CD4-positive, alpha-beta memory T cell (primary cell): ENCODE measurements at regions of chr9 and their contacts with region 1.

Region 1: GRCh38 chr9:135490980-135491464 is 9.5 kb upstream of the MRPS2 start:
- DNase-seq: no peak
- H3K4me3 ChIP-seq: no peak overlapping the region
- H3K4me3 Mint-ChIP-seq: no peak overlapping the region
- H3K27ac ChIP-seq: no peak overlapping the region
- H3K27ac Mint-ChIP-seq: no peak overlapping the region
- H3K4me1 ChIP-seq: no peaks in the 10 kb centered on the region
- H3K4me1 Mint-ChIP-seq: no peaks in the 10 kb centered on the region
- H3K27me3 ChIP-seq: no peaks in the 10 kb centered on the region
- H3K27me3 Mint-ChIP-seq: peaks cover 4% of the 10 kb centered on the region in 2 donors

Region 2: DNA sequence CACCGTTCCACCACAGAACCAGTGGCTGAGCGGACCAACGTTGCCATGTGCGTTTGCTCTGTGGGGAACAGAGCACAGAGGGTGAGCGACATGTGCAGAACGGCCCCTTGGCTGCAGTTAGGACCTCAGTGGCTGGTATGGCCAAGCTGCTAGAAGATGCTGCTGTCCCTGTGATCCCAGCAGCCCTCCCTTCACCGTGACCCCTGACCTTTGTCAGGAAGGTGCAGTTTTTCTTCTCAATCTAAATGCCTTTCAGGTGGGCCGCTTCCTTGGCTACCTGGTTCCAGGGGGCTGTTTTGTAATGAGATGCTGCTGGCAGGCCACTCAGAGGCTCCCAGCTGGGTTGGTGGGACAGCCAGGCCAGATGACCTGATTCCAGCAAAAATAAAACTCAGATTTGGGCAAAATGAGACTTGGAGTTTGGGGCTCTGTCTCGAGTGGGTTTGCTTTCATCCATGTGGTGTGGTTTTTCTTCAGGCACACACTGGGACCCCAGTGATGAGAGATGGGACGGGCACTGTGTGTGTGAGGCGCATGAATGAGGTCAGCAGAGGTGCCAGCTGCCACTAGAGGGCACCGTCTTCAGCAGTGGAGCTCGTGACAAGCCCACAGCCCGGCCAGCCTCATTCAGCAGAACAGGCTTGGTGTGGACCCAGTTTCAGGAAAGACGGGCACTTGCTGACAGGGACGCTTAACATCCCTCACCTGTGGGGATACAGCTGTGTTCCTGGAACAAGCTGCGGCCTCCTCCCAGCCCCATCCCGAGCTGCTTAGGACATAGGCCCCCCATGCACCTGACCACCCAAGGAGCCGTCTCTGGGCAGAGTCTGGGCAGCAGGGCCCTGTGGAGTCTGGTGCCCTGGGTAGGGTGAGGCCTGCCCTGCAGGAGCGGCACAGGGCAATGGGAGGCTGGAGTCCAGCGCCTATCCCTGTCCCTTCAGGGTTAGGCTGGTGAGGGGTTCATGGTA is 13.5 kb after region 1 on chr9:
- CTCF ChIA-PET with region 1: interaction called, 11 read pairs
- POLR2A ChIA-PET with region 1: no interaction called
- intact Hi-C with region 1: no loop called
- DNase-seq: peak; percentile 33 to 50 (median 35)
- H3K4me3 ChIP-seq: no peak overlapping the region
- H3K4me3 Mint-ChIP-seq: peak overlapping the region in 3 of 8 donors; percentile 21 to 43 (median 41)
- H3K27ac ChIP-seq: no peak overlapping the region
- H3K27ac Mint-ChIP-seq: peak overlapping the region in 3 of 7 donors; percentile 10 to 37 (median 12)
- H3K4me1 ChIP-seq: peaks cover 24% of the 10 kb centered on the region
- H3K4me1 Mint-ChIP-seq: peaks cover 5 to 28% (median 16%) of the 10 kb centered on the region in 4 donors
- H3K27me3 ChIP-seq: no peaks in the 10 kb centered on the region
- H3K27me3 Mint-ChIP-seq: no peaks in the 10 kb centered on the region

Region 3: DNA sequence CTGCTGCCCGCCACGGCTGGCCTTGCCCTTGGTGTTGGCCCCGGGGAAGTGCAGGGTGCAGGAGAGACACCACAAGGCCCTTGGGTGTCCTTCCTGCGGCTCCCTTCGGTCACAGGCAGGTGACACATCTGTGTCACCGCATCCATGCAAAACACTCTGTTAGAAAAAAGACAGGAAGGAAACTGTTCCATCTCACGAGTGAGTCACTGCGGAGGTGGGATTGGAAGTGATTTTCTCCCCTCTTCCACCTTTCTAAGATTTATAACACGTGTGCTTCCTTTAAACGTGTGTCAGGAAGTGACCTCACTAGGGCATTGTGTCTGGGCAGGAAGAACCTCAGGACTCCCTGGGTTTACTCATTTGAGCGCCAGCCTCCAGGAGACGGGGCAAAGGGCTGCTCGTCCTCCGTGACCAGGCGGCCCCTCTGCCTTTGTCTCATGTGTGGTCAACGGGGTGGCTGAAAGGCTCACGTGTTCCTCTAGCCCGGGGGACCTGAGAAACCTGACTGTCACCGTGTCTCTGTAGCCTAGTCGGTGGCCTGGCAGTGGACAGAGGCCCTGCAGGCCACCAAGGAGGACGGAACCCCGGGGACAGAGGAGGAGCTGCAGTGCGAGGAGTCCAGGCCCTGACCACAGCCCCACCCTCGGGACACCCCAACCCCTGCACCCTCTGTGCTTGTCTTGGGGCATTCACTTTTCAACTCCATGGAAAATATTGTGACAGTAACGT is 25.3 kb after region 1 on chr9:
- CTCF ChIA-PET with region 1: no interaction called
- POLR2A ChIA-PET with region 1: no interaction called
- intact Hi-C with region 1: no loop called
- DNase-seq: no peak
- H3K4me3 ChIP-seq: no peak overlapping the region
- H3K4me3 Mint-ChIP-seq: peak overlapping the region in 1 of 8 donors; percentile 11
- H3K27ac ChIP-seq: no peak overlapping the region
- H3K27ac Mint-ChIP-seq: no peak overlapping the region
- H3K4me1 ChIP-seq: no peaks in the 10 kb centered on the region
- H3K4me1 Mint-ChIP-seq: peaks cover 0 to 8% (median 4%) of the 10 kb centered on the region in 4 donors
- H3K27me3 ChIP-seq: no peaks in the 10 kb centered on the region
- H3K27me3 Mint-ChIP-seq: peaks cover 4% of the 10 kb centered on the region in 2 donors